Activated CD4-positive, alpha-beta memory T cell treated with anti-CD3 and anti-CD28 coated beads for 36 hours (primary cell): ENCODE measurements at regions of chr10 and their contacts with region 1.

Region 1: DNA sequence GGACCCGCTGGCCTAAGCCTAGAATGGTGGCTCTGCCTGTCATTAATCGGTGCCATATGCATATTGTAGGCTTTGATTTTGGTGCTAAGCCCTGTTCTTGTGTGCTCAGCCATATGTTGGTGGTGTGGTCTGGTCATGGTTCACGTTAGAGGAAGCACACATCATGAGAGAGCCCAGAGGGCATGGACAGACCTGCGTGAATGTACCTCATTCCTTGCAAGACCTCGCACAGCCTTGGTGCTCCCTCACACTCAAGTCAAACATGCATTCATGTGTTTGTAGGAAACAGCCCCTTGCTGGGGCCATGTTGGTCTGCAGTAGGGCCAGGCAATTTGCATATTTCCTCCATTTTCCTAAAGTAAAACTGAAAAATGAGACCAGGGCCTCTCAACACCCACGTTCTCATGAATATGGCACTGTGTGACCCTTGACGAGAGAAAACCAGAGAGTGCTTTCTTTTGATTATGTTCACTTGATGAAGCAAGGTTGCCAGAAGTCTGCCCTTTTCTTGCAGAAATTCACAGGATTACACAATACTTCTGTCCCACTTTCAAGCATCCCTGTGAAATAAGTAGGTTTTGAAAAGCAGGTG is 268.7 kb downstream of the CELF2 start:
- DNase-seq: peak; percentile 59
- H3K4me3 Mint-ChIP-seq: peak overlapping the region; percentile 30
- H3K27ac Mint-ChIP-seq: no peak overlapping the region
- H3K4me1 Mint-ChIP-seq: peaks cover 25% of the 10 kb centered on the region
- H3K27me3 Mint-ChIP-seq: no peaks in the 10 kb centered on the region

Region 2: DNA sequence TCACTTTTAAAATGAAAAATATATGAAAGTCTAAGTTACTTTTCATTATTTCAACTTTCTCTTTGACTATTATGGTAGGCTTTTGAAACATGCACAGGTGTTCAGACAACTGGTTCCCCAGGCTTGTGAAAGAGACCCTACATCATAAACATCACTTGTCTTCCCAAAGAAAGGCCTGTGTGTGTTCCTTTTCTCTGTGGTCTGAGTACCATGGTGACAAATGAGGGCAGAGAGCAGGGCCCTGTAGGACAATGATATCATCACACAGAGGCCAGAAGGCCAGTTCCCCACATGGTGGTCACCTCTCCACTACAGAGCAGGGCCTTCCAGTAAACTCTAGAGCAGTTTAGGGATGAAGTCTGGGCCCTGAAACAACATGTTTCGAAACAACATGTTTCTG is 36.3 kb after region 1 on chr10:
- CTCF ChIA-PET with region 1: no interaction called
- POLR2A ChIA-PET with region 1: no interaction called
- intact Hi-C with region 1: loop called (anchors 5 kb)
- DNase-seq: no peak
- H3K4me3 Mint-ChIP-seq: no peak overlapping the region
- H3K27ac Mint-ChIP-seq: peak overlapping the region; percentile 83
- H3K4me1 Mint-ChIP-seq: peaks cover 69% of the 10 kb centered on the region
- H3K27me3 Mint-ChIP-seq: no peaks in the 10 kb centered on the region